Activated CD4-positive, alpha-beta memory T cell treated with anti-CD3 and anti-CD28 coated beads for 36 hours (primary cell): ENCODE measurements at regions of chr12 and their contacts with region 1.

Region 1: GRCh38 chr12:113098446-113098896 is 37.1 kb downstream of the RASAL1 start:
- DNase-seq: peak; percentile 86
- H3K4me3 Mint-ChIP-seq: no peak overlapping the region
- H3K27ac Mint-ChIP-seq: peak overlapping the region; percentile 15
- H3K4me1 Mint-ChIP-seq: peaks cover 18% of the 10 kb centered on the region
- H3K27me3 Mint-ChIP-seq: no peaks in the 10 kb centered on the region

Region 2: DNA sequence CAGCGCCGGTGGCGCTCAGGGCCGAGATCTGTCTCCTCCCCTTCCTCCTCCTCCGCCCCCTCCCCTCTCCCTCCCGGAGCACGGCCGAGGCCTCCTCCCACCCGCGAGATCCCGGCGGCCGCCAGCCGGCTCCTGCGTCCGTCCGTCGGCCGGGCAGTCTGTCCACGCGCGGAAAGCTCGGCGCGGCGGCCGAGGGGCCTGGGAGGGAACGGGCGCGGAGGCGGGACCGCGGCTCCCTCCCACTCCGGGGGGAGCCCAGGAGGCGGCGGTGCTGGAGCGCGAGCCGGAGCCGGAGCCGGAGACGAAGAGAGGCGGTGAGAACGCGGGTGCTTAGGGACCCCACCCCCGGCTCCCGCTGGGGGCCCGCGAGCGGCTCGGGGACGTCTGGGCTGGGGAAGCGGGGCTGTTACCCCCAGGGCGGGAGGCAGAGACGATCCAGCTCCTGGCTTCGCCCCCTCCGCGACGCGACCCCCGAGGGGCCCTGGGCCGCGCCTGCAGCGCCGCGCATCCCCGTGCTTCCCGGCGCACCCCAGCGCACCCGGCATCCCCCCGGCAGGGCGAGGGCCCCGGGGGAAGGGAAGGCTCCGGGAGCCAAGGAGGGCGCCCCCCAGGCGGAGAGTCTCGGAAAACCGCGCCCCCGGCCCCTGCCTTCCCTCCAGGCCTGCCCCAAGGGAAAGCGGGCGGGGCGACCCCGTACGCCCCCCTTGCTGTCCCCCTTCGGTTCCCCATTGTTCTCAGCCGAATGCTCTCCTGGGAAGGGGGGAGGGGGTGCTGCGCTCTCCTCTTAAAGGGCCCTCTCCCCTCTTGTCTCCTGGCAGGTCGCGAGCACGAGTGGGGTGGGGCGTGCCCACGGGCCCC is 41.6 kb before region 1 on chr12 and contains the start of gene DTX1:
- CTCF ChIA-PET with region 1: interaction called, 7 read pairs
- POLR2A ChIA-PET with region 1: no interaction called
- intact Hi-C with region 1: loop called (anchors 2 kb)
- DNase-seq: peak; percentile 54
- H3K4me3 Mint-ChIP-seq: peak within 1 kb of the TSS; percentile 74
- H3K27ac Mint-ChIP-seq: no peak within 1 kb of the TSS
- H3K4me1 Mint-ChIP-seq: peaks cover 22% of the 10 kb centered on the region
- H3K27me3 Mint-ChIP-seq: no peaks in the 10 kb centered on the region
- total RNA-seq, gene DTX1: 11.0 to 12.4 TPM

Region 3: GRCh38 chr12:113086249-113087164 is 12.0 kb before region 1 on chr12:
- CTCF ChIA-PET with region 1: interaction called, 10 read pairs
- POLR2A ChIA-PET with region 1: no interaction called
- intact Hi-C with region 1: no loop called
- DNase-seq: peak; percentile 57
- H3K4me3 Mint-ChIP-seq: peak overlapping the region; percentile 21
- H3K27ac Mint-ChIP-seq: peak overlapping the region; percentile 69
- H3K4me1 Mint-ChIP-seq: peaks cover 55% of the 10 kb centered on the region
- H3K27me3 Mint-ChIP-seq: no peaks in the 10 kb centered on the region

Region 4: GRCh38 chr12:113109872-113110599 is 11.6 kb after region 1 on chr12:
- CTCF ChIA-PET with region 1: interaction called, 12 read pairs
- POLR2A ChIA-PET with region 1: no interaction called
- intact Hi-C with region 1: no loop called
- DNase-seq: no peak
- H3K4me3 Mint-ChIP-seq: no peak overlapping the region
- H3K27ac Mint-ChIP-seq: no peak overlapping the region
- H3K4me1 Mint-ChIP-seq: peaks cover 4% of the 10 kb centered on the region
- H3K27me3 Mint-ChIP-seq: no peaks in the 10 kb centered on the region

Region 5: DNA sequence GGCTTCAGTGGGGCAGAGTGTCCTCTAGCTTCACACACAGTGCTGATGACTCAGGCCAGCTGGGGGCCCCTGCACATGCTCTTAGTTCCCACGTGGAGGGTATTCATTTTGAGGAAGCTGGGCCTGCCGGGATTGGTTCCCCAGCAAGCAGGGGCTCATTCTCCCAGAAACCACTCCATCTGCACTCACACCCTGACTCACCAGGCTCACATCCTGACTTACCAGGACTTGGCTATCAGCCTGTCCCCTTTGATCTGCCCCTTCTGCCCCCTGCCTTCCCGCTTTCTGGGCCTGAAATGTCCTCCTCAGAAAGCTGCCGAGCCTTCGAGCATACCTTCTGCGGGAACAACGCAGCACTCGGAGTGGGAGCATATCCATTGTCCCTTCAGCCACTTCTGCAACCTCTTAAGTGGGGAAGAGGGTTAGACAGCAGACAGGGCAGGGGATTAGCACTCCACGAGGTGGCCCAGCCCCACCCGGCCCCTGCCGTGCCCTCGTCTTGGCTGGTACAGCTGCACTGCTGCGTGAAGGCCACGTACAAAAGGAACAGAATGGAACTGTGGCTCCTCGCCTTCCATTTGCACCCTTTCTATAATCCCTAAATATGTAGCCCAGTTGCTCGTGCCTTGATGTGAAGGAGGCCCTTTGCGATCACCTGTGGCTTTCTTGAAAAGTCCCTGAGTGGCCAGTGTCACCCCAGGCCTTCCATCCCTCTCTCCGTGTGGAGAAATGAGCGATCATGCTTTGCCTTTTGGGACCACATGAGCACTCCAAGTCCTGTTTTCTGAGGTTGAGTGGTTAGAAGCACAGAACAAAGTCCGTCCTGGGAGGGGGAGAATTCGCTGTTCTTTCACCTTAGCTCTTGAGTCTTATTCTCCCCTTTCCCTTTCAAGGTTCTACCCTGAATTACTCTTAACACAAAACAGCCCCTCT is 148.9 kb after region 1 on chr12:
- CTCF ChIA-PET with region 1: no interaction called
- POLR2A ChIA-PET with region 1: no interaction called
- intact Hi-C with region 1: no loop called
- DNase-seq: no peak
- H3K4me3 Mint-ChIP-seq: no peak overlapping the region
- H3K27ac Mint-ChIP-seq: no peak overlapping the region
- H3K4me1 Mint-ChIP-seq: peaks cover 12% of the 10 kb centered on the region
- H3K27me3 Mint-ChIP-seq: no peaks in the 10 kb centered on the region